ENCODE measurements at regions of chr3 and their contacts with region 1.

Region 1: GRCh38 chr3:8501371-8502131 is at the start of gene LMCD1:
- DNase-seq: peak; percentile 80
- H3K4me3 ChIP-seq: peak within 1 kb of the TSS; percentile 62
- CTCF ChIP-seq: peak; percentile 53

Region 2: DNA sequence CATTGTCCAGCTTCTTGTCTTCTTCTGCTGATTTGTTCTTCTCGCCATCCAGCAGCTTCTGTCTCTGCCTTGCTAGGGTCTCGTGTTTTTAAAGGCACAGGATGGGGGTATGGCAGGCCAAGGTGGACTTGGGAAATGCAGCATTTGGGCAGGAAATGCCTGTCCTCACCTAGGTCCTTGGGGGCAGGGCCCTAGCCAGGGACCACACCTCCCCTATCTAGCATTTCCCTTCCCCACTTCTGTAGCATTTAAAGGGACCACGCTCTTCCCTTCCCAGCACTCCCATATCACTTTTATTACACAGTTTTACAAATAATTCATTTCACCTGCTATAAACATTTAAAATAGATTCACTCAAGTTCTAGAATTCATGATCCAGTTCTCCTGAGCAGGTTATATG is 315.3 kb before region 1 on chr3:
- CTCF ChIA-PET with region 1: no interaction called
- POLR2A ChIA-PET with region 1: no interaction called
- DNase-seq: no peak
- H3K4me3 ChIP-seq: no peak overlapping the region
- CTCF ChIP-seq: no peak

Region 3: DNA sequence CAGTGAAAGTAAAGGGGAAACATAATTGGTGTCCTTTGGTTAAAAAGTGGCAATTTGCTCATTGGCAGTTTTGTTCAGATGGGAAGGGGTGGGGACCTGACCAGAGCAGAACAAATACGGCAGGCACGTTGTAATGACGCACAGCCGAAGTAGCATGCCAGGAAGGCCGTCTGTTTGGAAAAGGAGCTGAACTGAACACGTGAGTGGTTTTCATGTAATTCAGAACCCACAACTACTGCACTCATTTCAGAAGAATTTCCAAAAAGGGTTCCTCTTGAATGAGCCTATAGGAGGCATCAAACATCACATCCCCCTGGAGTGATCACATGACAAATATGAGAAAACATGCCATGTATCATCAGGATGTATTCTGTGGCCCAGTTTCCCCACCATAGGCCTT is 42.8 kb before region 1 on chr3:
- CTCF ChIA-PET with region 1: interaction called, 9 read pairs
- POLR2A ChIA-PET with region 1: interaction called, 22 read pairs
- DNase-seq: peak; percentile 98
- H3K4me3 ChIP-seq: no peak overlapping the region
- CTCF ChIP-seq: no peak

Region 4: DNA sequence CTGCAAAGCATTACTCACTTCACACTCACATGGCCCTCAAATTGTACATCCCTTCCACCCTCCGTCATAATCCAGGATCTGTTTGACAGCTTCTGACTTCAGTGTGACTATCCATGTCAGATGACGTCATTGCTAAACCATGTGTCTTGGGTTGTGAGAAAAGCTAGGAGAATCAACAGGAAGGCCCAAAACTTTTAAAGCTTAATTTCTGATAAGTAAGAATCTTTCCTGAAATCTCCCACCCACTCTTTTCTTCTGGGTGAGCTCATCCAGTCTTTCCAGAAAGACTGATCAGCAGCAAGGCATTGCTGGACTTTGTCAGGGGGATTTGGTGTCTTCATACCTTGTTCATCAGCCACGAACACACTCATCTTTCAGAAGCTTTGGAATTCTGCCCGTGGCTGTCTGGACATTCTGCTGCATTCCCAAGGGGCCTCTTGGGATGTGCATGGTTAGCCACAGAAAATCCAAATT is 11.4 kb before region 1 on chr3:
- CTCF ChIA-PET with region 1: interaction called, 9 read pairs
- POLR2A ChIA-PET with region 1: interaction called, 27 read pairs
- DNase-seq: peak; percentile 98
- H3K4me3 ChIP-seq: no peak overlapping the region
- CTCF ChIP-seq: no peak

Region 5: DNA sequence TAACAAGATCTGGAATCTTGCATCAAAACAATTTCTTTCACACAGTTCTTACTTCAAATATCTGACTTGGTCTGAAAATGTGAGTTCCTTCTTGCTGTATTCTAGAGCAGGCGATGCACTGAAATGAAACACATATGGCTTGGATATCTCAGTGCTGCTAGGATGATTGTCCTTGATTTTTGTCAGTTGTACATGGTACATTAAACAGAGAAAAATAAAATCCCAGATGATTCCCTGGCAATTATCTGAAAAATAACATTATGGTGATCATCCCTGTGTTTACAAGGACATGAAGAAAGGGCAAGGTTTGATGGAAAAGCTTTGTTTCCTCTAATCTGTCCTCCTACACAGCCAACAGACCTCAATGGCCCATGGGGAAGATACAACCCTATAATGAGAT is 10.7 kb after region 1 on chr3:
- CTCF ChIA-PET with region 1: interaction called, 10 read pairs
- POLR2A ChIA-PET with region 1: interaction called, 4 read pairs
- DNase-seq: no peak
- H3K4me3 ChIP-seq: no peak overlapping the region
- CTCF ChIP-seq: no peak